ENCODE measurements at regions of chr13 and their contacts with region 1.

Region 1: DNA sequence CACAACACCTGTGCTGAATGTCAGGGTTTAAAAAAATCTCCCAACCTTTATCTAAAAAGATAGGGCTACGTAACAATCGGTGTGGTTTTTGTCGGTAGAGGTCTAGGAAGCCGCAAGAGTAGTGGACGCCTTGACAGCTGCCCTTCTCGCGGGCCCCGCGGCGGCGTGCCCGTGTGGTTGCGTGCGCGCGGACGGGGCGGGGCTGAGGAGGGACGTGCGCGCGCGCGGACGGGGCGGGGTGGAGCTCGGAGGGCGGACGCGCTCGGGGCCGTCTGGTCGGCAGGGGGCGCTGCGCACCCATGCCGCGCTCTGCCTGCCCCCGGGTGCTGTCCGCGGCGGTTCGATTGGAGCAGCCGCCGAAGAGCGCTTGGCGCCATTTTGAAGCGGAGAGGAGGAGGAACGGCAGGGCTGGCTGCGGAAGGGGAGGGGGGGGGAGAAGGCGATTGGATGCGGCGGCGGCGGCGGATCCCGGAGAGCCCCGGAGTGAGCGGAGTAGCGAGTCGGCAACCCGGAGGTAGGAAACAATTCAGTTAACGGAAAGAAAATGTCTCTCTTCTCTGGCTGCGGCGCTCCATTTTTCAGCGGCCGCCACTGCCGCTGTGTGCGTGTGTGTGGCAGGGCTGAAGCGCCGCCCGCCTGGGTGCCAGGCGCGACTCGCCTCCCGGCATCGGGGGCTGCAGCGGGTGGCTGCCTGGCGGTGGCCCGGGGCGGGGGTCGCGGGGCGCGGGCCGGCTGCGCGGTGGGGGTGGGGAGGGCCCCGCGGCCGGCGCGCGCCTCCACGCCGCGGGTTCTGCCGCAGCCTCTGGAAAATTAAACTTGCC is at the start of gene PDS5B:
- DNase-seq: peak; percentile 95 to 98
- ATAC-seq: peak; percentile 93 to 99 (median 98)
- H3K4me3 ChIP-seq: peak within 1 kb of the TSS; percentile 89
- H3K27ac ChIP-seq: peak within 1 kb of the TSS; percentile 94
- H3K4me1 ChIP-seq: peaks cover 31% of the 10 kb centered on the region
- H3K27me3 ChIP-seq: no peaks in the 10 kb centered on the region
- CTCF ChIP-seq: peak; percentile 96
- total RNA-seq, gene PDS5B: 18.3 to 28.1 (median 22.1) TPM

Region 2: GRCh38 chr13:32687275-32687674 is 101.0 kb after region 1 on chr13:
- intact Hi-C with region 1: no loop called
- DNase-seq: no peak
- ATAC-seq: peak in 2 of 4 donors; percentile 55 to 60
- H3K4me3 ChIP-seq: no peak overlapping the region
- H3K27ac ChIP-seq: no peak overlapping the region
- H3K4me1 ChIP-seq: peaks cover 3% of the 10 kb centered on the region
- H3K27me3 ChIP-seq: no peaks in the 10 kb centered on the region
- CTCF ChIP-seq: no peak

Region 3: DNA sequence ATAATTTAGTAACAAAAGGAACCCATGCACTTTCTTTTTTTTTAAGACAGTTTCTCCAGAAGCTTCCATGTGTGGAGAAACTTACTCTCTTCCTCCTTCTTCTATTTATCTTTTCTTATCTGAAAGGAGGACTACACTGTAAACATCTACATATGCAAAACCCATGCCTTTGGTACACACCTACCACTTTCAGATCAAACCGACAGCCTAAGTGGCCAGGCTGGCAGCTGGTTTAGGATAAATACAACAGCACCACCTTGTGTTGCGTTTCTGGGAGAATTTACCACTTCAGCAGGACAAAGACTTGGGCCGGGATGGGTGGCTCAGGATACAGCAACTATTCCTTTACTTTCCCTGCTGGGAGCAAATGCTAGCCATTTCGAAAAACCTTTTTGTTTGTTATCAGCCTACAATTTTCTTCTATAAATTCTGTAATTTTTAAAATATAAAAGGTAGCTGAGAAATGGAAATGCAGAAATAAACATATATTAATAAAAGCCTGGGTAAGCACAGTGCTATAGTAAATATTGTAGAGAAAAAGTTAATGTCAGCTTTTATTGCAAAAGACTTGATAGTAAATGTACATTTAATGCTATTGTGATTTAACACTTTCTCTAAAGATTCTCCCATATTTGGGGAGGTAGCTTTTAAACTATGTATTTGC is 1137.6 kb after region 1 on chr13:
- intact Hi-C with region 1: loop called in 1 of 2 experiments (anchors 5 kb)
- DNase-seq: peak; percentile 33 to 62
- ATAC-seq: peak; percentile 82 to 99 (median 95)
- H3K4me3 ChIP-seq: no peak overlapping the region
- H3K27ac ChIP-seq: no peak overlapping the region
- H3K4me1 ChIP-seq: peaks cover 10% of the 10 kb centered on the region
- H3K27me3 ChIP-seq: no peaks in the 10 kb centered on the region
- CTCF ChIP-seq: peak; percentile 78